Right ventricle myocardium inferior (tissue), 1 donor: ENCODE measurements at regions of chrX and their contacts with region 1.

Region 1: DNA sequence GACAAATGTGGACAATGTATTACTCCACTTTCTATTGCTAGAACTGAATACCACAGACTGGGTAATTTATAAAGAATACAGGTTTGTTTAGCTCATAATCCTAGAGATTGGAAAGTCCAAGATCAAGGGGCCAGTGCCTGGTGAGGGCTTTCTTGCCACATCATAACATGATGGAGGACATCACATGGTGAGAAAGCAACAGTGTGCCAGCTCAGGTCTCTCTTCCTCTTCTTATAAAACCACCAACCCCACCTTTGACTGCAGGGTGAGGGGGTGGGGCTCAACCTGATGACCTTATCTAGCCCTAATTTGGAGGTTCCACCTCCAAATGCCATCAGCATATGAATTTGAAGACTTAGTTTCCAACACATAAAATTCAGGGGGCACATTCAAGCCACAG is 105.7 kb upstream of the CXorf66 start:
- DNase-seq: no peak
- ATAC-seq: no peak

Region 2: DNA sequence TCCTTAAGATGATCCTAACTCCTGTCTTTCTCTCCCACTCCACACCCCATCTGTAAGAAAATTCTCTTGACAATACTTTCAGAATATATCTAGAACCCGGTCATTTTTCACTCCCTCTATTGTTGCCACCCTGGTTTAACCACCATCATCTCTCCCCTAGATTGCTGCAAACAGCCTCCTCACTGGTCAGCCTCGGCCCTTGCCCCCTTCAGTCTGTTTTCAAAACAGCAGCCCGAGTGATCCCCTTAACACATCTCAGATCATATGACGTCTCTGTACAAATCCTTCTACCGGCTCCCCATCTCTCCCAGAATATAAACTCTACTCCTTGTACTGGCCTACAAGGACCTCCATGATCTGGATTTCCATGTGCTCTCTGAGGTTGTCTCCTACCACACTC is 575.7 kb before region 1 on chrX:
- intact Hi-C with region 1: no loop called
- DNase-seq: no peak
- ATAC-seq: no peak

Region 3: GRCh38 chrX:140141444-140142029 is 70.5 kb after region 1 on chrX:
- intact Hi-C with region 1: loop called (anchors 2 kb)
- DNase-seq: no peak
- ATAC-seq: no peak